ENCODE measurements at regions of chr9 and their contacts with region 1.

Region 1: DNA sequence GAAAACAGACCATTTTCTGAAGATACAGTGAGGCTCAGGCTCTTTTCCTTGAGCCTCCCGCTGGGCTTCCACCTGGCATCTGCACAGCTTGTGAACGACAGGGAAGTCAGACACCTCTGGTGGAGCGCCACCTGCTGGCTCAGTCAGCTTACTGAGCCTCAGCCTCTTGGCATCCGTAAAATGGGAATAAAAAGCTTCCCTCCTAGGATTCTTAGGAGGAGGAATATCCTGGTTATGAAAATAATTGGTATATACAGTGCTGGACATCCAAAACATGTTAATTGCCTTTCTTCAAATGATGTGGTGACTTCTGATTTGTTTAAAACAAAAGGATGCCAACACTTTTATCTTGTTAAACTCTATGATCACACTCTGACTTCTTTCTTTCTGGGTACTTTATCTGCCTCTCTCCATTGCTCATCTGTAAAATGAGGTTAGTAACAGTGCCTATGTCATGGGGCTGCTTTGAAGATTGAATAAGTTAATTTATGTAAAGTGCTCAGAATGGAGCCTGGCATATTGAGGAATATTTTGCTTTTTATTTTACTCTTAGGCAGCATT is 67.5 kb downstream of the MAMDC2 start:
- DNase-seq: peak; percentile 73
- H3K4me3 ChIP-seq: no peak overlapping the region
- H3K27ac ChIP-seq: no peak overlapping the region
- H3K4me1 ChIP-seq: peaks cover 19% of the 10 kb centered on the region
- H3K27me3 ChIP-seq: peaks cover 3 to 4% of the 10 kb centered on the region in 2 experiments
- CTCF ChIP-seq: peak; percentile 88 to 94
- POLR2A ChIP-seq: no peak

Region 2: DNA sequence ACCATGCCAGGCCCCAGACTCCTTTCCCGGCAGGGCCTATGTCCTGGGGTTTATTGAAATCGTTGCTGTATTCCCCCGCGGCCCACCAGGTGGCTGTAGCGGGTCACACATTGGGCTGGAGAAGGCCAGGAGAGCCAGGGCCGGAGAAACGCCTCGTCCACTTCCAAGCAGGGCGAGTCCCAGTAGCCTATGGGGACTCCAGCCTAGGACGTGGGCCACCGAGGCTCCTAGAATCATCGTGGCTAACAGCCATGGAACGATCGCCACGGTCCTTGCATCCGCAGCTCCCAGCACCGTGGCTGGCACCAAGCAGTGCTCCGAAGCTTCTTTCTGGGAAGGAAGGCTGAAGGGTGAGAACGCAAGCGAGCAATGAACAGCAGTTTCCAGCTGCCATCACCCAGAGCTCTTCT is 698.4 kb before region 1 on chr9:
- CTCF ChIA-PET with region 1: no interaction called
- POLR2A ChIA-PET with region 1: no interaction called
- dilution Hi-C with region 1: no loop called
- intact Hi-C with region 1: loop called (anchors 5 kb)
- DNase-seq: peak; percentile 74
- H3K4me3 ChIP-seq: no peak overlapping the region
- H3K27ac ChIP-seq: no peak overlapping the region
- H3K4me1 ChIP-seq: no peaks in the 10 kb centered on the region
- H3K27me3 ChIP-seq: no peaks in the 10 kb centered on the region
- CTCF ChIP-seq: peak; percentile 79 to 81
- POLR2A ChIP-seq: no peak

Region 3: GRCh38 chr9:69932901-69933300 is 178.2 kb before region 1 on chr9:
- CTCF ChIA-PET with region 1: interaction called, 30 read pairs
- POLR2A ChIA-PET with region 1: no interaction called
- dilution Hi-C with region 1: no loop called
- intact Hi-C with region 1: loop called (anchors 5 kb)
- DNase-seq: peak; percentile 44
- H3K4me3 ChIP-seq: no peak overlapping the region
- H3K27ac ChIP-seq: no peak overlapping the region
- H3K4me1 ChIP-seq: no peaks in the 10 kb centered on the region
- H3K27me3 ChIP-seq: peaks cover 4% of the 10 kb centered on the region in 2 experiments
- CTCF ChIP-seq: peak; percentile 28 to 48
- POLR2A ChIP-seq: no peak

Region 4: DNA sequence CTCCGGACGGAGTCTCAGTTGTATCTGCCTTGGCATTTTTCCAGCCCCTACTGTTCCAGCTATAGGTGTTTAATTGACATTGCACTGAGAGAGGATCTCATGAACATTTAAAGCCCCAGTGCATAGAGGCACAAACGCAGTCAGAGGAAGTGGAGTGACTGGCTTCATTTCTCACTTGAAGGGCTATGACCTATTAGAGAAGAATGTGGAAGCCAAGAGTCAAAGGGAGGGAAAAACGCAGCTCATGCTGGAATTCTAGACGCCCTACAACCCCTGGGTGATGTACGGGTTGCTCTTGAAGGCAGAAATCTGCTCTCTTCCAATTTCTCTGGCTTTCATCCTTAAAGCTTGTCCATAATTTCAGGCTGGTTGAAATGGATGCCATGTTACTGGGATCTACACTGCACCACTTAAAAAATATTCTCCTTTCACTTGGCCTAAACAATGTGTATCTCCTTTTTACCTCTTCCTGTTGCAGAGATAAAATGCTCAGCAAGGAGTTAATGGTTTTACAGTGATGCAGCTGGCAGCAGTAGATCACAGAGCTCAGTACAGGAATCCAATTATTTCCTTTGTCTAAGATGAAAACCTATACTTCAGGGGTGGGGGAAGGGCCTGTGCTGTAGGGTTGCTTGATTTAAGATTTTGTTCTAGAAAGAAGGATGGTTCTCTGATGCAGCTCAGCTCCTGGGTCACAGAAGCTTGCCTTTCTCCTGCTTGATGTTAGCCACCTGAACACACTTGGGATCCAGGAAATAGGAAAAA is 129.3 kb before region 1 on chr9:
- CTCF ChIA-PET with region 1: interaction called, 597 read pairs
- POLR2A ChIA-PET with region 1: no interaction called
- dilution Hi-C with region 1: no loop called
- intact Hi-C with region 1: no loop called
- DNase-seq: peak; percentile 32
- H3K4me3 ChIP-seq: no peak overlapping the region
- H3K27ac ChIP-seq: no peak overlapping the region
- H3K4me1 ChIP-seq: peaks cover 8% of the 10 kb centered on the region
- H3K27me3 ChIP-seq: no peaks in the 10 kb centered on the region
- CTCF ChIP-seq: no peak
- POLR2A ChIP-seq: no peak

Region 5: DNA sequence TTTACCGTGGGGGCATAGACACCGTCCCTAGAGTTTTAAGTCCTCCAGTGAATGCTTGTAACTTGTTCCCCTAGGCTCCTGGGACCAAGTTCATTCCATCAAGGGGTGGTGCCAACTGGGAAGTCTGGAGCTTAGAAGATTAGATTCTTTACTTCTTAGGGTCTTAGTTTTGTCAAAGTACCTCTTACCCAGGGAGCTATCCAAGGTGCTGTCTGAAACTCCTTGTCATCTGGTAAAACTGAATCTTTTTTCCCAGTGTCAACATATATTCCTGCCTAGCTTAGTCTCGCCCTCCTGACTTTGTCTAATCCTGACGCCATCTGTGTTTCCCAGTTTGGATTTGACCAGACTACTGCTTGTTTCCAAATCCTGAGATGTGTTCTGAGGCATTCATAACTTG is 25.9 kb before region 1 on chr9:
- CTCF ChIA-PET with region 1: interaction called, 61 read pairs
- POLR2A ChIA-PET with region 1: no interaction called
- dilution Hi-C with region 1: no loop called
- intact Hi-C with region 1: no loop called
- DNase-seq: peak; percentile 44
- H3K4me3 ChIP-seq: no peak overlapping the region
- H3K27ac ChIP-seq: no peak overlapping the region
- H3K4me1 ChIP-seq: no peaks in the 10 kb centered on the region
- H3K27me3 ChIP-seq: peaks cover 0 to 5% of the 10 kb centered on the region in 2 experiments
- CTCF ChIP-seq: no peak
- POLR2A ChIP-seq: no peak

Region 6: GRCh38 chr9:70217029-70217428 is 105.9 kb after region 1 on chr9:
- CTCF ChIA-PET with region 1: no interaction called
- POLR2A ChIA-PET with region 1: no interaction called
- dilution Hi-C with region 1: no loop called
- intact Hi-C with region 1: no loop called
- DNase-seq: no peak
- H3K4me3 ChIP-seq: no peak overlapping the region
- H3K27ac ChIP-seq: no peak overlapping the region
- H3K4me1 ChIP-seq: no peaks in the 10 kb centered on the region
- H3K27me3 ChIP-seq: no peaks in the 10 kb centered on the region
- CTCF ChIP-seq: no peak
- POLR2A ChIP-seq: no peak

Region 7: GRCh38 chr9:70229579-70229978 is 118.5 kb after region 1 on chr9:
- CTCF ChIA-PET with region 1: interaction called, 38 read pairs
- POLR2A ChIA-PET with region 1: no interaction called
- dilution Hi-C with region 1: no loop called
- intact Hi-C with region 1: loop called (anchors 5 kb)
- DNase-seq: peak; percentile 19
- H3K4me3 ChIP-seq: no peak overlapping the region
- H3K27ac ChIP-seq: no peak overlapping the region
- H3K4me1 ChIP-seq: no peaks in the 10 kb centered on the region
- H3K27me3 ChIP-seq: no peaks in the 10 kb centered on the region
- CTCF ChIP-seq: peak in 1 of 2 donors; percentile 18
- POLR2A ChIP-seq: no peak

Measured in endothelial cell of umbilical vein (primary cell).